ENCODE measurements at regions of chr1 and their contacts with region 1.

Region 1: GRCh38 chr1:117059678-117060440 is at the start of gene TTF2:
- DNase-seq: peak; percentile 98
- H3K4me3 Mint-ChIP-seq: no peak within 1 kb of the TSS
- H3K27ac Mint-ChIP-seq: no peak within 1 kb of the TSS
- H3K4me1 Mint-ChIP-seq: peaks cover 41% of the 10 kb centered on the region
- H3K27me3 Mint-ChIP-seq: no peaks in the 10 kb centered on the region
- total RNA-seq, gene TTF2: 113 to 122 TPM

Region 2: DNA sequence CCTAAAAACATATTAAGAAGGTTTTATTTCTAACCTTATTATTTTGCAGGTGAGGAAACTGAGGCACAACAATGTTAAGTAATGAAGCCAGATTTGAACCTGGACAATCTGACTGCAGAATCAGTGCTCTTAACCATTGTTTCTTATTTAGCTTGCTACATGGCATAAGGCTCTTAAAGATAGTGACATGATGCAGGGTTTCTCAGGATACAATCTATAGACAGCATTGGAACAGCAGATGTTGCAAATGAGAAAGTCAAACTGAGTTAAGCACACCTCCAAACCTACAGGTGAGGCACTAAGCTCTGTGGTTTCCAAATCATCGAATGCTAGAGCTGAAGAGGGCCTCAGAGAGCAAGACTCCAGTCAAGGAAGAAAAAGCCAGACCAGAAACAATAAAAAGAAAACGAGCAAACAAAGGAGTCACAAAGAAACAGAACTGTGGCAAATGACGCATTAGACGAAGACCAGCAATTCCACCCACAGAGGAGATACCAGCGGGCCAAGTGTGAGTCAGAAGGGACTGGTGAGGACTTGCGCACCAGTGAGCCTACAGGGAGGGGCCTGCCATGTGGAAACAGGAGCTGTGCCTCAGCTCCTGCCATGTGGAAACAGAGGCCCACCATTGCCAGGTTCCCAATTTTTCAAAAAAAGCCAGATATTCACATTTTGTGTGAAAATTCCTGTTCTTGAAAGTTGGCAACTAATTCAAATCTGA is 503.4 kb before region 1 on chr1:
- CTCF ChIA-PET with region 1: no interaction called
- intact Hi-C with region 1: loop called (anchors 5 kb)
- DNase-seq: peak; percentile 82
- H3K4me3 Mint-ChIP-seq: no peak overlapping the region
- H3K27ac Mint-ChIP-seq: peak overlapping the region; percentile 78
- H3K4me1 Mint-ChIP-seq: peaks cover 56% of the 10 kb centered on the region
- H3K27me3 Mint-ChIP-seq: no peaks in the 10 kb centered on the region

Region 3: GRCh38 chr1:116754198-116754977 is 305.5 kb before region 1 on chr1 and contains the start of gene CD2:
- CTCF ChIA-PET with region 1: interaction called, 6 read pairs
- intact Hi-C with region 1: loop called (anchors 1 kb)
- DNase-seq: peak; percentile 81
- H3K4me3 Mint-ChIP-seq: peak within 1 kb of the TSS; percentile 100
- H3K27ac Mint-ChIP-seq: peak within 1 kb of the TSS; percentile 100
- H3K4me1 Mint-ChIP-seq: peaks cover 28% of the 10 kb centered on the region
- H3K27me3 Mint-ChIP-seq: no peaks in the 10 kb centered on the region
- total RNA-seq, gene CD2: 251 to 264 TPM

Region 4: DNA sequence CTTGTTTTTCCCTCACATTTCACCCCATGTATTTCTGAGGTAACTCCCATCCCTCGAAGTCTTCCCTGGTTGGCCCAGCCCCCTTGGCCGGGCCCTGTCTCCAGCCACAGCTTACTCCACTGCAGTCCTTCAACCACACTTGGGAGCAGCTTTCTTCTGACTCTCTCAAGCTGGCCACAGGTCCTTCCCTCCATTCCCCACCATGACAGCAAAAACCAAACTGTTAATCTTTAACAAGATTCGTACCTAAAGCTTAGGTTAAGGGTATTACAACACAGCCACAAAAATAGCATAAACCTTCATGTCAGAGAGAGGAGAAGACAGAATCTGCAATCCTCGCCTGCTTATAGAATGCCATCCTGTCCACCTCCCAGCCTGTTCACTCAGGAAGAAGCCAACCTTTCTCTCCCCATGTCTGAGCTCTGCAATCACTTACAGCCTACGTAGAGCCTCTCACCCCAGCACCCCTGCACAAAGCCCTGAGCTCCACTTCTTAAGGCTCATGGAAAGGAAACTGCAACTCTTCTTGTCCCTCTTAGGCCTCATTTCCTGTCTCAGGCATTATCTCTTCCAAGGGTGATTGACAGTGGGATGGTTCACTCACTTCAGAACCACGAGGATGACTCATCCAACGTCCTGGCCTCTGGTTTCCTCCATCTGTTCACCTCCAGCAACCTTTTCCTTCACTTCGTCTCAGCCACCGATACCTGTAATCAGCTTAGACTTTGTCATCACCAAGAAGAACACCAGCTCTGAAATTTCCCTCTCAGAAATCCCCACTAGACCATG is 232.8 kb before region 1 on chr1:
- CTCF ChIA-PET with region 1: interaction called, 5 read pairs
- intact Hi-C with region 1: loop called (anchors 1 kb)
- DNase-seq: peak; percentile 92
- H3K4me3 Mint-ChIP-seq: peak overlapping the region; percentile 83
- H3K27ac Mint-ChIP-seq: peak overlapping the region; percentile 97
- H3K4me1 Mint-ChIP-seq: peaks cover 74% of the 10 kb centered on the region
- H3K27me3 Mint-ChIP-seq: no peaks in the 10 kb centered on the region

Region 5: DNA sequence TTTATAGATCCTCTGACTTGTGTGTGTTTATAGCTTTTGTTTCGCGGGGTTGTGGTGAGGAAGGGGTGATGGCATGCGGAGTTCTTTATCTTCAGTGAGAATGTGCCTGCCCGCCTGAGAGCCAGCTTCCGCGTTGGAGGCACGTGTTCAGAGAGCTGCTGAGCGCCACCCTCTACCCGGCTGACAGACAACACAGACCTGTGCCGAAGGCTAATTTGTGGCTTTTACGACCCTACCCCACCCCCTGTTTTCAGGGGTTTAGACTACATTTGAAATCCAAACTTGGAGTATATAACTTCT is 72.7 kb before region 1 on chr1:
- CTCF ChIA-PET with region 1: interaction called, 5 read pairs
- intact Hi-C with region 1: loop called (anchors 1 kb)
- DNase-seq: peak; percentile 83
- H3K4me3 Mint-ChIP-seq: peak overlapping the region; percentile 68
- H3K27ac Mint-ChIP-seq: peak overlapping the region; percentile 91
- H3K4me1 Mint-ChIP-seq: peaks cover 60% of the 10 kb centered on the region
- H3K27me3 Mint-ChIP-seq: no peaks in the 10 kb centered on the region

Region 6: GRCh38 chr1:117367047-117368018 is 307.5 kb after region 1 on chr1 and contains the start of gene MAN1A2:
- CTCF ChIA-PET with region 1: no interaction called
- intact Hi-C with region 1: loop called (anchors 1 kb)
- DNase-seq: peak; percentile 76
- H3K4me3 Mint-ChIP-seq: peak within 1 kb of the TSS; percentile 94
- H3K27ac Mint-ChIP-seq: peak within 1 kb of the TSS; percentile 94
- H3K4me1 Mint-ChIP-seq: peaks cover 48% of the 10 kb centered on the region
- H3K27me3 Mint-ChIP-seq: no peaks in the 10 kb centered on the region
- total RNA-seq, gene MAN1A2: 14.6 to 17.4 TPM

Region 7: DNA sequence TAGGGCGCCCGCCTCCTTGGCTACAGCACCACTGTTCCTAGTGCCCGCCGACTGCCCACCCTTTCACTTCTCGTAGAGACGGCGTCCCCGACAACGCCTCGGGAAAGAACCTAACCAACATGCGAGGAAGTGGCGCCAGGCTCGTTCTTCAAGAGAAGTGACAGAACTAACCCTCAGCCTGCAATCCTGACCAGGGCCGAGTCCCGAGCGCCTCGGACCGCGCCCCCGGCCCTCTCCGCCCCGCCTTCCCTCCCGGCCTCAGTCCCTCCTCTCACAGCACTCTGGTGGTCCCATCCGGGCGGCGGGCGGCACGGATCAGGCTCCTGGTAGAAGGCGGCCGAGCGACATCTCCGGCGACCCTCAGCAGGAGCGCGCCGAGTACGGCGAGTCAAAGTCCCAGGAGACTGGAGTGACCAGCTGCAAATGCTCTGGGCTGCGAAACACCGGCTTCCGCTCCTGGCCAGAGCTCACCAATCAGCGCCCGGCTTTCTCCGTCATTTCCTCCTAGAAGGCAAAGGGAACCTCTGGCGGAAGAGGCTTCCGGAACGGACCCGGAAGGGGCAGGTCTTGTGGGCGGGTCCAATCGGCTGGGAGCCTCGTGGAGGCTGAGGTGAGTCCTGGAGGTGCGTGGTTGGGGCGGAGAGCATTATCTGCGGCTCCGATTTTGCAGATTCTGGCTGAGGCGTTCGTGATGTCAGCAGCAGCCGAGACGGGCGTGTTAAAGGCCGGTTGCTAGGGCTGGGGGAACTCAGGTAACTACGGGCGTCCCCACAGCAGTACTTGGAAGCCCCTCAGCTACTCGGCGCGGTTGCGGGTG is 869.5 kb after region 1 on chr1 and contains the starts of genes GDAP2 and WDR3:
- CTCF ChIA-PET with region 1: no interaction called
- intact Hi-C with region 1: loop called (anchors 10 kb)
- DNase-seq: peak; percentile 97
- H3K4me3 Mint-ChIP-seq: peak within 1 kb of the TSS; percentile 96
- H3K27ac Mint-ChIP-seq: peak within 1 kb of the TSS; percentile 79
- H3K4me1 Mint-ChIP-seq: peaks cover 54% of the 10 kb centered on the region
- H3K27me3 Mint-ChIP-seq: no peaks in the 10 kb centered on the region
- total RNA-seq, gene GDAP2: 19.9 to 20.0 TPM
- total RNA-seq, gene WDR3: 45.2 to 49.6 TPM